A549 (cell line): ENCODE measurements at regions of chr15 and their contacts with region 1.

Region 1: GRCh38 chr15:101258238-101259144 is 6.6 kb upstream of the CHSY1 start:
- DNase-seq: peak; percentile 61 to 79
- ATAC-seq: peak; percentile 78 to 88
- H3K4me3 ChIP-seq: no peak overlapping the region
- H3K27ac ChIP-seq: no peak overlapping the region
- H3K4me1 ChIP-seq: 0 out of 3 replicates have a peak, but pooled peaks cover 3% of the 10 kb centered on the region
- CTCF ChIP-seq: peak; percentile 99
- EP300 ChIP-seq: no peak
- POLR2A ChIP-seq: no peak
- RAD21 ChIP-seq: peak; percentile 99 to 100

Region 2: DNA sequence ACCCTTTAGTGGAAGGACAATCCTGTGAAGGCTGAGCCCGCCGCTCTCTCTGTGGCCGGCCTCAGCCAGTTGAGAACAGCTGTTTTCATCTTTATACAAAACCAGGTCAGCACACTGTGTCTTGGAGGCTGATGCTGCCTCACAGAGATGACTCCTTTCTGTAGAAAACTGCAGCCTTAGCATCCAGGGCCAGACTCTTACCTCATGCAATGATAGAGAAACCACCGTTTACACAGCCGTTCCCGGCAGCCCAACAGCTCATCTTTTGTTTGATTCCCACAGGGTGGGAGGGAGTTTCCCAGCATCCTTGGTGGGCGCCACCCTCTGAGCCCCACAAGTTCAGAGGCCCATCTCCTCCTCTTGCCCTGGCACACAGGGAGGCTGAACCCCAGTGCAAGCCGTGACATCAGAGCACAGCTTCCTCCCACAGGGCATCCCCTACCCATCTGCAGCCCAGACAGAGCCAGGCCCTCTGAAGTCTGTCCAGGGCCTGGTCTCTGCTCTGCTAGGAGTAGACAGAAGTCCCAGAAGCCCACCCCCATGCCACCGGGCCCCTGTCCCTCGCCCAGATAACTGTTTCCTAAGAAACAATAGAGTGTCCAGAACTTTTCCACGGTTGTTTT is 234.3 kb before region 1 on chr15:
- CTCF ChIA-PET with region 1: interaction called, 60 read pairs
- POLR2A ChIA-PET with region 1: no interaction called
- DNase-seq: no peak
- ATAC-seq: no peak; a peak in 1 of 6 replicates
- H3K4me3 ChIP-seq: no peak overlapping the region
- H3K27ac ChIP-seq: no peak overlapping the region
- H3K4me1 ChIP-seq: no peaks in the 10 kb centered on the region
- CTCF ChIP-seq: no peak
- EP300 ChIP-seq: no peak
- POLR2A ChIP-seq: no peak
- RAD21 ChIP-seq: no peak

Region 3: GRCh38 chr15:101070502-101071273 is 187.8 kb before region 1 on chr15:
- CTCF ChIA-PET with region 1: interaction called, 17 read pairs
- POLR2A ChIA-PET with region 1: no interaction called
- DNase-seq: no peak
- ATAC-seq: peak in 1 of 2 experiments; percentile 10; a peak in 1 of 6 replicates
- H3K4me3 ChIP-seq: no peak overlapping the region
- H3K27ac ChIP-seq: peak overlapping the region in 1 of 2 experiments; percentile 50; a peak in 2 of 6 replicates
- H3K4me1 ChIP-seq: no peaks in the 10 kb centered on the region; the same call in 2 of the 3 replicates
- CTCF ChIP-seq: no peak
- EP300 ChIP-seq: no peak
- POLR2A ChIP-seq: no peak
- RAD21 ChIP-seq: no peak

Region 4: DNA sequence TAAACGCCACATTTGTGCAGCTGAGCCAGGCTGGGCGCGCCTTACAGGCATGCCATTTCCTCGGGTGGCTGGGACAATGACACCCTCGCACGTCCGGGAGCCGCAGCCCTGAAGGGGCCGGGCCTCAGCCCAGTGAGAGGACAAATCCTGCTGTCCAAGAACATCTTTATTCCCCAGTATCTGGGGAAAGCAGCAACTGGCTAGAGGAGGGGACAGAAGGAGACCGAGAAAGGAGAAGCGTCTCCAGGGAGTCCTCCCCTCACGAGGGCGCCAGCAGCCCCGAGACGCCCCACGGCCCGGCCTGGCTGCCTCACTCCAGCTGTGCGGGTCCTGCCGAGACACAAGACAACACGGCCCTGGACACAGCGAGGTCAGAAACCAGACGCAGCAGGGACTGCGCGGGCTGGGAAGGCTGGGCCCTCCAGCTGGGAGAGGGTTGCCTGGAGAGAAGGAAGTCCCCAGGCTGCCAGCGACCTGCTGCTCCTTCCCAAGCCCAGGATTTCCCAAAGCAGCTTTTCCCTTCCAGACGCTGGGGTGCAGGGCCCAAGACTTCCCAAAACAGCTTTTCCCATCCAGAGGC is 136.9 kb before region 1 on chr15:
- CTCF ChIA-PET with region 1: interaction called, 11 read pairs
- POLR2A ChIA-PET with region 1: no interaction called
- DNase-seq: no peak
- ATAC-seq: peak; percentile 42 to 60; a peak in 3 of 6 replicates
- H3K4me3 ChIP-seq: no peak overlapping the region
- H3K27ac ChIP-seq: no peak overlapping the region
- H3K4me1 ChIP-seq: no peaks in the 10 kb centered on the region
- CTCF ChIP-seq: no peak
- EP300 ChIP-seq: no peak
- POLR2A ChIP-seq: no peak
- RAD21 ChIP-seq: no peak

Region 5: DNA sequence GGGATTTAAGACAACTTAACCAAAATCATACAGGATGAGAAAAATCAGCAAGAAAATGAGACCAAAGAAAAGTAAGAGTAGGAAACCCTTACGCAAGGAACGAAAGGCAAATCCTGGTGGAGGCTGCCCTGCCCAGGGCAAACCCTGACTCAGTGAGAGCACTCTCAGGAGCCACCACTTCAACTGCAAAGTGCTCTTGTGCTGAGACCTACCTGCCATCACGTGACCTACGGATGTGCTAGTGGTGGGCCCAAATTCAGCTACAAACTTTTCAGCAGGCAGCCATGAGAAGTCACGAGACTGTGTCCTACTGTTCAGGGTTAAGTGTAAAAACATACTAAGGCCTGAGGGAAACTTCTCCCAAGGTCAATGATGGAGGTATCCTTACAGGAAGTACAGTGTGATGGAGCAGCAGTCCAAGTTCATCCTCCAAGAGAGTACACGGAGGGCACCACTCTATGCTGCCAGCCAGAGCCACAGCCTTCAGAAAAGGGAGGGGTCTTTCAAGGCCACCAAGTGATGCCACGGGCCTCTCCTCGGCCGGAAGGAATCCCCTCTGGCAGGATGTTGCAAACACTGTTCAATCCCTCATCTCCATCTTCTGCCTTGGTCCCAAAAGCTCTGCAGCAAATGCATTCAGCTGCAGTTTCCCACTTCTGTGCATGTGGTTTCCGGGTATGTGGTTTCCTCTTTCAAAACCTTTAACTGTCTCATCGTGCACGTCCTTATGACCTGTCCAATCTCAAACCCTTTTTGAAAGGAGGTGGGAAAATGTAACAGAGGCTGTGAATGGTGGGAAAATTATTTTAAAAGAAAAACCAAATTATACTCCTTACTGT is 16.1 kb before region 1 on chr15:
- CTCF ChIA-PET with region 1: interaction called, 58 read pairs
- POLR2A ChIA-PET with region 1: no interaction called
- DNase-seq: no peak
- ATAC-seq: peak in 1 of 2 experiments; percentile 30; a peak in 2 of 6 replicates
- H3K4me3 ChIP-seq: no peak overlapping the region
- H3K27ac ChIP-seq: no peak overlapping the region
- H3K4me1 ChIP-seq: no peaks in the 10 kb centered on the region
- CTCF ChIP-seq: no peak
- EP300 ChIP-seq: no peak
- POLR2A ChIP-seq: no peak
- RAD21 ChIP-seq: no peak